ENCODE measurements at regions of chr2 and their contacts with region 1.

Region 1: GRCh38 chr2:216519154-216519762 is 20.6 kb downstream of the RPL37A start:
- DNase-seq: peak in 9 of 14 experiments; percentile 5 to 70 (median 28)
- ATAC-seq: no peak
- H3K4me3 ChIP-seq: no peak overlapping the region
- H3K4me3 Mint-ChIP-seq: no peak overlapping the region
- H3K27ac ChIP-seq: no peak overlapping the region
- H3K27ac Mint-ChIP-seq: no peak overlapping the region
- H3K4me1 ChIP-seq: no peaks in the 10 kb centered on the region
- H3K4me1 Mint-ChIP-seq: no peaks in the 10 kb centered on the region
- H3K27me3 ChIP-seq: no peaks in the 10 kb centered on the region
- H3K27me3 Mint-ChIP-seq: no peaks in the 10 kb centered on the region
- CTCF ChIP-seq: peak; percentile 70

Region 2: GRCh38 chr2:216666461-216667233 is 147.4 kb after region 1 on chr2:
- CTCF ChIA-PET with region 1: interaction called, 5 read pairs
- POLR2A ChIA-PET with region 1: no interaction called
- intact Hi-C with region 1: loop called (anchors 1 kb)
- DNase-seq: peak; percentile 34 to 79 (median 58)
- ATAC-seq: peak; percentile 90
- H3K4me3 ChIP-seq: no peak overlapping the region
- H3K4me3 Mint-ChIP-seq: no peak overlapping the region
- H3K27ac ChIP-seq: no peak overlapping the region
- H3K27ac Mint-ChIP-seq: no peak overlapping the region
- H3K4me1 ChIP-seq: no peaks in the 10 kb centered on the region
- H3K4me1 Mint-ChIP-seq: no peaks in the 10 kb centered on the region
- H3K27me3 ChIP-seq: peaks cover 0 to 5% of the 10 kb centered on the region in 2 experiments
- H3K27me3 Mint-ChIP-seq: no peaks in the 10 kb centered on the region
- CTCF ChIP-seq: peak; percentile 93

Measured in CD4-positive, alpha-beta T cell (primary cell).